PC-9 (cell line): ENCODE measurements at regions of chr1 and their contacts with region 1.

Region 1: GRCh38 chr1:221741711-221742554 is at the start of gene DUSP10:
- DNase-seq: peak; percentile 98 to 99
- H3K4me3 ChIP-seq: peak within 1 kb of the TSS; percentile 72
- H3K27ac ChIP-seq: peak within 1 kb of the TSS; percentile 88
- H3K4me1 ChIP-seq: peaks cover 26% of the 10 kb centered on the region
- H3K27me3 ChIP-seq: no peaks in the 10 kb centered on the region
- CTCF ChIP-seq: 0 out of 2 replicates have a peak, but pooled peaks have one; percentile 18
- total RNA-seq, gene DUSP10: 7.0 and 8.7 TPM in 2 replicates

Region 2: DNA sequence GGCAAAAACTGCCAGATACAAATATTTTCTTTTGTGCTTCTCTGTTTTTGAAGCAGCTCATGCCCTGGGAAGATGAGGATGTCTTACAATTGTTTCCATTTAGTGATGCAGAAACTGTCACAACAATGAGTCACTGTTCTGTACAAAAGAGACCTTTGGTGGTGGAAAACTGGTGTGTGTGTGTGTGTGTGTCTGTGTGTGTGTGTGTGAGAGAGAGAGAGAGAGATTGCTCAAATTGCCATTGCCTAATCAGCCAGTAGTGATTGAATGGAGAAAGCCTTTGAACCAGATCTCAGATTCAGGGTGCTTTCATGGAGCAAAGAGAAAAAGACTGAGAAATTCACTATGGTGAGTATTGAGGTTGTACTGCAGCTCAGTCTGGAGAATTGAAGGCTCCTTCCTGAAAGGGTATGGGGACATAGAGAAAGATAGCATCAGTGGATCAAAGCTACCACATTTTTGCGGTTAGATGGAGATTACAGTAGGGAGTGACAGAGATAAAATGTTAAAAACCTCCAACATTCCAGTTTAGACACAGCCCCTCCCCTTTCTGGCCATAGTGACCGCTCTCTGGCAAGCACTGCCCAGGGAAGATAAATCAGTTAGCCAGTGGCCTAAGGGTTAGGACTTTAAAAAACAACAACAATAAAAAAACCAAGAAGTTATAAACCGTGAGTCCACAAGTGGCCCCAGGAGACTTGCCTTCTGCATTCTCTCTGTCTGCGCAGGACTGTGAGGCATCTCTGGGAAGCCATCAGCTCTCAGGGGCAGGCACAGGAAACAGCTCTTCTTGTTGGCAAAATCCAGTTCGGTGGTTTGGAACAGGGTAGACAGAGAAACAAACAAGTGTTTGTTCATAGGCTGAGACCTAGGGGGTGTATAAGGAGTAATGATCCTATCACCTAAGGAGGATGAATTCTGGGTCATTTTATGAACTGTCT is 406.5 kb before region 1 on chr1:
- CTCF ChIA-PET with region 1: no interaction called
- POLR2A ChIA-PET with region 1: interaction called, 12 read pairs
- intact Hi-C with region 1: no loop called
- DNase-seq: peak; percentile 82 to 90
- H3K4me3 ChIP-seq: no peak overlapping the region
- H3K27ac ChIP-seq: peak overlapping the region; percentile 67
- H3K4me1 ChIP-seq: peaks cover 29% of the 10 kb centered on the region
- H3K27me3 ChIP-seq: no peaks in the 10 kb centered on the region
- CTCF ChIP-seq: no peak

Region 3: DNA sequence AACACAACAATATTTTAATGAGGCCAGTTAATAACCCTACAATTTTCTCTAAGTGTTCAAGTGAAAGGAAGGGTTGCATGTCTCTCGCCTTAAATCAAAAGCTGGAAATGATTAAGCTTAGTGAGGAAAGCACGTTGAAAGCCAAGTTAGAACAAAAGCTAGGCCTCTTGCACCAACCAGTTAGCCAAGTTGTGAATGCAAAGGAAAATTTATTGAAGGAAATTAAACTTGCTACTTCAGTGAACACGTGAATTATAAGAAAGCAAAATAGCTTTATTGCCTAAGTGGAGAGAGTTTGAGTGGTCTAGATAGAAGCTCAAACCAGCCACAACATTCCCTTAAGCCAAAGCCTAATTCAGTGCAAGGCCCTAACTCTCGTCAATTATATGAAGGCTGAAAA is 135.7 kb before region 1 on chr1:
- CTCF ChIA-PET with region 1: no interaction called
- POLR2A ChIA-PET with region 1: no interaction called
- intact Hi-C with region 1: loop called (anchors 1 kb)
- DNase-seq: no peak
- H3K4me3 ChIP-seq: no peak overlapping the region
- H3K27ac ChIP-seq: 0 out of 2 replicates have a peak overlapping the region, but pooled peaks have one; percentile 44
- H3K4me1 ChIP-seq: peaks cover 51% of the 10 kb centered on the region
- H3K27me3 ChIP-seq: no peaks in the 10 kb centered on the region
- CTCF ChIP-seq: no peak

Region 4: DNA sequence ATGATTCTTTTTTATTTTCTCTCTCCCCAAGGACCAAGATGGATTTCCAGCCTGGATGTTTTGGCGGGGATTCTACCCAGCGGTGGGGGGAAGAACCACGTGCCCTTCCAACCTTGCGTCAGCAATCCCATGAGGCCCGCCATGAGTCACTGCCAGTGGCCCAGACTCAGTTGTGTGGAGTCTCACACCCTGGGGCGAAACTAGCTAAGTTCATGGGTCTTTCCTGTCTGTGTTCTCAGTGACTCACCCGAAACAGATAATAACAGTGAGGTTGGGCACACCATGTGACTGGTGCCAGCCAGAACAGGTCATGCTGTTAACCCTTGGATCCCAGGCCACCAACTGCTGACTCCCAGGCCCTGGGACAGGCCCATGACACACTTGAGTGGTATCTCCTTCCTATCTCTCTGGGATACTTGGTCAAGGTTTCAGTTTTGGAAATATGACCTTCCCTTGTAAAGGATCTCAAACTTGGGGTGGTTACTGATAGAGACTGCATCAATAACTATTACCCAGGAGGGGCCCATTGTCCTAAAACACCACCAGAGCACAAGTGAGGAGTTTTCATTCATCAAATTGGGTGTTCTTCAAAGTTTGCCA is 98.0 kb after region 1 on chr1:
- CTCF ChIA-PET with region 1: interaction called, 18 read pairs
- POLR2A ChIA-PET with region 1: no interaction called
- intact Hi-C with region 1: loop called (anchors 1 kb)
- DNase-seq: peak; percentile 81 to 96
- H3K4me3 ChIP-seq: no peak overlapping the region
- H3K27ac ChIP-seq: peak overlapping the region; percentile 87
- H3K4me1 ChIP-seq: peaks cover 35% of the 10 kb centered on the region
- H3K27me3 ChIP-seq: no peaks in the 10 kb centered on the region
- CTCF ChIP-seq: no peak

Region 5: DNA sequence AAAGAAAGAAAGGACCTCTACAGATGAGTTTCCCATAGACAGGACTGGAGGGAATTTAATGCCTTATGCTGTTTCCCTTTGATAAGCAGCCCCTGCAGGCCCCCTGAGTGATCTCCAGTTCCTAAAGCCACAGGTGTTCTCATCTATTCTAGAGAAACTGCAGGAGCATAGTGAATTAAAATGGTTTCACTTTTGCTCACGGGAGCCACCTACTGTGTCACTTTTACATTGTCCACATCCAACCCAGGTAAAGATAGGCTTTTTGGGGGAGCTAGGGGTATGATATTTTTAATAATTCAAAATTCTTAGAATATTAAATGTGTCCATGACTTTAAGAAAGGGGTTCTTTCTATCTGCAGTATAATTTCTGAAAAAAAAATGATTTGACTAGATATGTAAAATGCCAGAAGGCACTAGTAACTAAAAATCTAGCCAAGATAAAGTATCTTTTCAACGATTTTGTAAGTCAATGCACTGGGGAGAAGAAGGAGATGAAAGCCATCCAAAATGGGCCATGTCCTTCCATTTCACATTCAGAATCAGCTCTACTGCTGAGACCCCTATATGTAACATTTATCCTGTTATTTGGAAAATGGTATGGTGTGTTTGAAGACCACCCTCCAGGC is 267.3 kb after region 1 on chr1:
- CTCF ChIA-PET with region 1: interaction called, 6 read pairs
- POLR2A ChIA-PET with region 1: no interaction called
- intact Hi-C with region 1: loop called (anchors 2 kb)
- DNase-seq: peak in 1 of 2 experiments; percentile 19
- H3K4me3 ChIP-seq: no peak overlapping the region
- H3K27ac ChIP-seq: no peak overlapping the region
- H3K4me1 ChIP-seq: peaks cover 4% of the 10 kb centered on the region
- H3K27me3 ChIP-seq: no peaks in the 10 kb centered on the region
- CTCF ChIP-seq: peak; percentile 56

Region 6: DNA sequence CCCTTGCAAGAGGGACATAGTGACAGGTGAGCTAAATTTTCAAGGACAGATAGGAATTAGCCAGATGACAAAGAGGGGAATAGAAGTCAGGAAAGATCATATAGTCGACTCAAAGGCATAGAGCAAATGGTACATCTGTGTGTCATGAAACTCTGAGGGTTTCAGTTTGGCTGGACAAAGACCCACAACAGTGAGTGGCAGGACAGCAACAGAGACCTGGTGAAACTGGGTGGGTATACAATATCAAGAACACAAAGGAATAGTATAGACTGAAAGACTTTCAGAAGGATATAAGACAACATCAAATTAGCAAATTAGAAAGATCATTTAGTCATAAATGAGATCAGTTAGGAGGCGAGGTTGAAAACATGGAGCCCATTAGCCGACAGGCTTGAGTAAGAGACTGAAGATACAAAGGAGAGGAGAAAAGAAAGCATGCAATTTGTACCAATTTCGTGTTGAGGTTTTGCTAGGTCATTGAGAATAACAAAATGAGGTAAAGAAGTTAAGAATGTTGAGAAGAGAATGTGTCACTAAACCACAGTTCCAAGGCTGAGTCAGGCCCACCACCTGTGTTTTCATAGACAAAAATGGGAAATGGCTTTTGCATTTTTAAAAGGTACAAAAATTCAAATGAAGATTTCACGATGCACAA is 592.2 kb after region 1 on chr1:
- CTCF ChIA-PET with region 1: no interaction called
- POLR2A ChIA-PET with region 1: interaction called, 12 read pairs
- intact Hi-C with region 1: no loop called
- DNase-seq: no peak
- H3K4me3 ChIP-seq: no peak overlapping the region
- H3K27ac ChIP-seq: no peak overlapping the region
- H3K4me1 ChIP-seq: no peaks in the 10 kb centered on the region
- H3K27me3 ChIP-seq: no peaks in the 10 kb centered on the region
- CTCF ChIP-seq: no peak